Mammary epithelial cell (primary cell): ENCODE measurements at regions of chr2 and their contacts with region 1.

Region 1: GRCh38 chr2:238093181-238094140 is 6.7 kb upstream of the ESPNL start:
- DNase-seq: no peak
- H3K4me3 ChIP-seq: no peak overlapping the region
- H3K27ac ChIP-seq: no peak overlapping the region
- H3K4me1 ChIP-seq: no peaks in the 10 kb centered on the region
- H3K27me3 ChIP-seq: no peaks in the 10 kb centered on the region
- CTCF ChIP-seq: no peak

Region 2: DNA sequence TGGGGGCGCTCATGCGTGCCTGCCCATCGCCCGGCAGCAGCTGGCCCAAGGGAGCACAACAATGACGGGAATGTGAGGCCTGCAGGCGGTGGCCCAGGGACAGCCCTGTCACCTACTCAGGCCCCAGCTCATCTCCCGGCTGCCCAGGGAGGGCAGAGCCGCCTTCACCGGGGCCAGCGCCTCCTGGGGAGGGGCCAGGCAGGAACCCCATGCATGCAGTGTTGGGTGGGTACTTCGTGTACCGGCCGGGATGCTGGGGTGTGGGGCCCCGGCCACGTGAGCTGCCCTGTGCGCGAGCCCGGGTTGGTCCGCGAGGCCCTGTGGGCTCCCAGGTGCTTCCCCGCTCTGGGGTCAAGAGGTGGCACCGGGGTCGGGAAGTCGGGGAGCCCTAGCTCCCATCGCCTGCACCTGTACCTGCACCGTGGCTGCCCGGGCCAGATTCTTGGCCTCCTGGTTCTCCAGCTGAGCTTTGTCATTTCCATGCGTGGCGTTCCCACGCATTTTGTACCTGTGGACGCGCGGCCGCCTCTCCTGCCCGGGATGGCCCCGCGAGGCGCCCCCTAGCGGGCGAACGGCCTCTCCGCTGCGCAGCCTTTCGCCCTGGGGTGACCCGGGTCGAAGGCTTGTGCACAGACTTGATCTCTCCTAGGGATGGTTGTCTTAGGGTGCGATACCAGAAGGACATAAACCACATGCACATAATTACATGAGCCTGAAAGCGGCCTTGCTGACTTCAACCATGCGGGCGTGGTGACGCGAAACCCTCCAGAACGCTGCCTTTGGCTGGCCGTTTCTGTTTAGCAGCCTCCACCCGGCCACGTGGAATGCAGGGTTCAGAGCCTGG is 46.0 kb after region 1 on chr2:
- CTCF ChIA-PET with region 1: no interaction called
- dilution Hi-C with region 1: loop called (anchors 5 kb)
- in situ Hi-C with region 1: no loop called
- intact Hi-C with region 1: no loop called
- DNase-seq: no peak
- H3K4me3 ChIP-seq: no peak overlapping the region
- H3K27ac ChIP-seq: no peak overlapping the region
- H3K4me1 ChIP-seq: peaks cover 42% of the 10 kb centered on the region
- H3K27me3 ChIP-seq: no peaks in the 10 kb centered on the region
- CTCF ChIP-seq: no peak

Region 3: DNA sequence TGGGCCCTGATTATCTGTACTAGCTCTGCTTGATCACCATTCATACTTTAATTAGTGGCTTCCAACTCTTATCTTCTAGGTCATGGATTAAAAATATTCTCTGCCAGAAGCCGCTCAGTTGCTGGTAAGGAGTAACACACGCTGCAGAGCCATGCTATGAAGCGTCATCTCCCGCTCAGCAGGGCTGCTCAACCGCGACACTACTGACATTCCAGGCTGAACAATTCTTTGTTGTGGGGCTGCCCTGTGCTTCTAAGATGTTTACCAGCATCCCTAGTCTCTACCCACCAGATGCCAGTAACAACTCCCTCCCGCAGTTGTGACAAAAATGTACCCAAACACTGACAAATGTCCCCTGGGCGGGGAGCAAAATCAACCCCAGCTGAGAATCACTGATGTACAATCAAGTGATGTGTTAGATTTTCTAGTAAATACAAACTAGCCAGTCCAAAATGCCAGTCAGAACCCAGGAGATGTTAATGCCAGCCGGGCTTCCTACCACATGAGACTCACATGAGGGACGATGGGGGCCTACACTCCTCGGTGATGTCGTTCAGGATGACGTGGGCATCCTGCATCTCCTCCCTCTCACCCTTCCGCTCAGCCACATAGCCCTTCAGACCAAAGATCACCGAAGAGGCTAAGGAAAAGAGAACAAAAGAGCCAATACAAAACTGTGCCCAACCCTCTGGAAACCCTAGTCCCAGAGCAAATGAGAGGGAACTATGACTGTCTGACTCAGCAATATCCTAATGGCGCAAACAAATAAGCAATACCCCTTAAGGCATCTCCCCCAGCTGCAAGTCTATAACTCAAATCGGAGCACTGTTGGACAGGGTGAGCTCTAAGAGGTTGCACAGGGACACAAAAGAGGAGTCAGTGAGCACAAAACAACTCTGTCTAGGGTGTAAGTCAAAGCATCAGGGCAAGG is 94.4 kb after region 1 on chr2:
- CTCF ChIA-PET with region 1: no interaction called
- dilution Hi-C with region 1: loop called (anchors 5 kb)
- in situ Hi-C with region 1: no loop called
- intact Hi-C with region 1: no loop called
- DNase-seq: no peak
- H3K4me3 ChIP-seq: no peak overlapping the region
- H3K27ac ChIP-seq: no peak overlapping the region
- H3K4me1 ChIP-seq: no peaks in the 10 kb centered on the region
- H3K27me3 ChIP-seq: no peaks in the 10 kb centered on the region
- CTCF ChIP-seq: no peak